ENCODE measurements at regions of chr21 and their contacts with region 1.

Region 1: DNA sequence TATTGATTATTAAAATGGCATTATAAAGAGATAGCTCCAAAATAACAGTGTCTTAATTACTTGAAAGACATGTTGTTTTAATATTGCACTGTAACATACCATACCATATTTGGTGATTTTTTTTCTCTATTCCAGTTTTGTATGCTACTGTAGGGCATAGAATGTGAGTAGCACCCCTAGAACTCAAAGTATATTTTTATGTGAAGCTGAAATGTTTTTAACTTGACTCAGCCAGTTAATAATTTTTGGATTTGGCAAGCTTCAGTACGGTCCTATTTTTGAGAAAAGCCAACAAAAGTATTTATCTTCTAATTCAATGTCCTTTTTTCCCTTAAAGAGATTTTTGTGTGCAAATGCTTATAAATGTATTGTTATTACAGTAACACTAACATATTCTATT is 593.8 kb downstream of the USP25 start:
- DNase-seq: peak; percentile 49
- H3K4me3 ChIP-seq: 0 out of 2 replicates have a peak overlapping the region, but pooled peaks have one; percentile 3
- H3K27ac ChIP-seq: no peak overlapping the region
- H3K4me1 ChIP-seq: peaks cover 28% of the 10 kb centered on the region
- H3K27me3 ChIP-seq: no peaks in the 10 kb centered on the region

Region 2: DNA sequence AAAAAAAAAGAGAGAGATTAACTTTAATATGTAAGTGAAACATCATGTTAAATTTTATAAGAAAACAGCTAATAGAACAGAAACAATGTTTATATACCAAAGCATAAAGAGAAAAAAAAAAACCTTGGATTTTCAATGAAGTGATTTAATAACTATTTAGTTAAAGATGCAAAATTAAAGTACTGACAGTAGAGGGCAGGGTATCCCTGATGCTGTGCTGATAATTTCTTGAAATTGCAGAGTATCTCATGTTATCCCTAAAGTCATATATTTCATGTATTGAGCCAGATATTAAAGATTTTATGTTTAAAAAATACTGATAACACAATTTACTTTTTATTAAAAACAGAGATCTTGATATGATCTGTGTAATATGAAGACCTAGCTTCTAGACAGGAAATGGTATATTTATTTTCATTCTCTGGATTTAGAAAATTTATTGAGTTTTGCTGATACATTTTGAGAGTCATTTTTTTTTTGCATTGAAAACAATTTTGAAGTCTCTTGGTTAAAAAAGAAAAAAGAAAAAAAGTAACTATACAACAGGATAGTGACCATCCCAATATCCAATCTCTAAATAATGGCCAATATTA is 320.6 kb before region 1 on chr21:
- in situ Hi-C with region 1: loop called (anchors 10 kb)
- DNase-seq: peak; percentile 63
- H3K4me3 ChIP-seq: no peak overlapping the region
- H3K27ac ChIP-seq: no peak overlapping the region
- H3K4me1 ChIP-seq: peaks cover 14% of the 10 kb centered on the region
- H3K27me3 ChIP-seq: no peaks in the 10 kb centered on the region